Naive thymus-derived CD4-positive, alpha-beta T cell (primary cell): ENCODE measurements at regions of chr20 and their contacts with region 1.

Region 1: DNA sequence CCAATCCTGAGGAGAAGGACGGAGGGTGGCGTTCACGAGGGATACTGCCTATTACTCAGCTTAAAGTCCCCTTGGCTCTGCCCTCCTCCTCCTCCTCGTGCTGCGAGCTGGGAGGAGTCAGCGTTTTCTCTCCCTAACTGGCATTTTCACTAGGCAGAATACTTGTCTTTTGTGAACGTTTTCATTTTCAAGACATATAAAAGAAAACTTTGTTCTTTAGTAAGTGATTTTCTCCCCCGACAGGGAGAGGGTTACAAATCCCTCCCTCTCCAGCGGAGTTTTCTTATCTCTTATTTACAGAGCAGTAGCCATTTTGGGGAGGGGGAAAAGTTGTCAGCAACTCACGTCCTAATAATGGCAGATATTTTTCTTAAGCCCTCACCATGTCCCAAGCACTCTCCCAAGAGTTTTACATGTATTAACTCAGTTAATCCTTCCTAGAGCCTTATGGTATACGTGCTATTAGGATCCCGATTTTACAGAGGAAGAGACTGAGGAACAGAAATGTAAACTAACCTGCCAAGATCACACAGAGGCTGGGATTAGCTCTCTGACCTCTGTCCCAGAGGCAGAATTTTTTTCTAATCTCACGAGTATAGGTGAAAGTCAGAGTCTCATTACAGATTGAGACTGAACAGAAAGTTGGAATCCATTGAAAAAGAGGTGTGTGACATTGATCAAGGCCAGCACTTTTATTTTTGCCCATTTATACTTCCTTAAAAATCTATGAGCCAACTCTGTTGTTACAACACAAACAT is 30.0 kb upstream of the ZNF217 start:
- DNase-seq: peak in 4 of 9 donors; percentile 28 to 44 (median 31)
- ATAC-seq: peak; percentile 83
- H3K4me3 ChIP-seq: peak overlapping the region; percentile 56
- H3K4me3 Mint-ChIP-seq: peak overlapping the region; percentile 78 to 92 (median 87)
- H3K27ac ChIP-seq: peak overlapping the region; percentile 74
- H3K27ac Mint-ChIP-seq: peak overlapping the region; percentile 91 to 98 (median 97)
- H3K4me1 ChIP-seq: peaks cover 31 to 32% of the 10 kb centered on the region in 2 donors
- H3K4me1 Mint-ChIP-seq: peaks cover 17 to 53% (median 44%) of the 10 kb centered on the region in 7 donors
- H3K27me3 ChIP-seq: no peaks in the 10 kb centered on the region
- H3K27me3 Mint-ChIP-seq: no peaks in the 10 kb centered on the region

Region 2: GRCh38 chr20:53594068-53595017 is 29.3 kb before region 1 on chr20:
- CTCF ChIA-PET with region 1: interaction called, 4 read pairs
- POLR2A ChIA-PET with region 1: interaction called, 62 read pairs
- intact Hi-C with region 1: loop called in 1 of 2 experiments (anchors 1 kb)
- DNase-seq: peak; percentile 93 to 100 (median 96)
- ATAC-seq: peak; percentile 90
- H3K4me3 ChIP-seq: peak overlapping the region; percentile 81
- H3K4me3 Mint-ChIP-seq: peak overlapping the region; percentile 89 to 99 (median 92)
- H3K27ac ChIP-seq: peak overlapping the region; percentile 97
- H3K27ac Mint-ChIP-seq: peak overlapping the region; percentile 90 to 98 (median 97)
- H3K4me1 ChIP-seq: peaks cover 14 to 21% of the 10 kb centered on the region in 2 donors
- H3K4me1 Mint-ChIP-seq: peaks cover 23 to 66% (median 54%) of the 10 kb centered on the region in 7 donors
- H3K27me3 ChIP-seq: no peaks in the 10 kb centered on the region
- H3K27me3 Mint-ChIP-seq: no peaks in the 10 kb centered on the region

Region 3: DNA sequence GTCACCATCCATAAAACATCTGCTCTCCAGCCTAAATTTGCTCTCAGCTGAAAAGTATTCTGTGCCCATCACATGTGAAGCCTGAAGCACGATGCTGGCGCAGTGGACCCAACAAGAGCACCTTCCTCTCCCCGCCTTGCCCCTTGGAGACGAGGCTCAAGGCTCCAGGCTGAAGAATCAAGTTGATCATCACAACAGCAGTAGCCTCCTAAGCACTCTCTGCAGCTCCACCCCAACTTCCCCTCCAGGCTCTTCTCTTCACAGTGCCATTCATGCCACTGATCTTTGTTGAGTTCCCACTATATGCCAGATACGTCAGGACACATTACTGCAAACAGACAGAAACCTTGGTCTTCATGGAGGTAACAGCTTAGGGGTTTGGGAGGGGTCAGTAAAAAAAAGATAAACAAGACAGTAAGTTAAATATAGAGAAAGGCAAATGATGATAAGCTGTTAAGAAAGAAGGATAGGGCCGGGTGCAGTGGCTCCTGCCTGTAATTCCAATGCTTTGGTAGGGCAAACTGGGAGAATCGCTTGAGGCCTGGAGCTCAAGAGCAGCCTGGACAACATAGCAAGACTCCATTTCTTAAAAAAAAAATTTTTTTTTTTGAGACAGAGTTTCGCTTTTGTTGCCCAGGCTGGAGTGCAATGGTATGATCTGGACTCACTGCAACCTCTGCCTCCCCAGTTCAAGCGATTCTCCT is 11.7 kb after region 1 on chr20:
- CTCF ChIA-PET with region 1: no interaction called
- POLR2A ChIA-PET with region 1: interaction called, 15 read pairs
- intact Hi-C with region 1: loop called in 1 of 2 experiments (anchors 1 kb)
- DNase-seq: no peak
- ATAC-seq: peak; percentile 54
- H3K4me3 ChIP-seq: no peak overlapping the region
- H3K4me3 Mint-ChIP-seq: peak overlapping the region in 4 of 10 donors; percentile 4 to 67 (median 15)
- H3K27ac ChIP-seq: no peak overlapping the region
- H3K27ac Mint-ChIP-seq: peak overlapping the region; percentile 14 to 78 (median 49)
- H3K4me1 ChIP-seq: peaks cover 0 to 8% of the 10 kb centered on the region in 2 donors
- H3K4me1 Mint-ChIP-seq: peaks cover 33 to 55% (median 45%) of the 10 kb centered on the region in 7 donors
- H3K27me3 ChIP-seq: no peaks in the 10 kb centered on the region
- H3K27me3 Mint-ChIP-seq: no peaks in the 10 kb centered on the region

Region 4: DNA sequence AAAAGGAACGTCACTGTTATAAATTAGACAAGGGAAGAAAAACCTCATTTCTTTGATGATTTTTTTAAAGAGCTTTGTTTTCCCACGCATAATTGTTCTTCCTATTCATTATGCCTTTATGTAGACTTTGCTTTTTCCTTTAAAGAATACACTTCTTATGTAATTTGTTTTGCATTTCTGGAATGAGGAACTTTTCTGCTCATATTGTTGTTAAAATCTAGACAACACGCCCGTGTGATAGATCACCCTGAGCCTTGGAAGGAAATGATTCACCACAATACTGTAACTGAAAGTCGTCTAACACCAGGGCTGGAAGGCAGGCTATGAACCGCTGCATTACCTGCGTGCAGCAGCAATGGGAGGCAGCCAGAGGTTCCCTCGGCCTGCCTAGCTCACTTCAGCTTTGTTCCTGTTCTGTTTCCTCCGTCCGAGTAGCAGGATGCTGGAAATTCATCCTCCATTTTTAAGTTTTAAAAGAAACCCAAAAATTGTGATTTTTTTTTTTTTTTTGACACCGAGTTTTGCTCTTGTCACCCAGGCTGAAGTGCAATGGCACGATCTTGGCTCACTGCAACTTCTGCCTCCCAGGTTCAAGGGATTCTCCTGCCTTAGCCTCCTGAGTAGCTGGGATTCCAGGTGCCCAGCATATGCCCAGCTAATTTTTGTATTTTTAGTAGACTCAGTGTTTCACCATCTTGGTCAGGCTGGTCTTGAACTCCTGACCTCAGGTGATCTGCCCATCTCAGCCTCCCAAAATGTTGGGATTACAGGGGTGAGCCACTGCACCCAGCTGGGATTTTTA is 19.6 kb after region 1 on chr20:
- CTCF ChIA-PET with region 1: interaction called, 9 read pairs
- POLR2A ChIA-PET with region 1: interaction called, 29 read pairs
- intact Hi-C with region 1: loop called (anchors 1 kb)
- DNase-seq: peak in 8 of 9 donors; percentile 61 to 81 (median 75)
- ATAC-seq: peak; percentile 98
- H3K4me3 ChIP-seq: peak overlapping the region; percentile 56
- H3K4me3 Mint-ChIP-seq: peak overlapping the region; percentile 73 to 92 (median 85)
- H3K27ac ChIP-seq: peak overlapping the region; percentile 77
- H3K27ac Mint-ChIP-seq: peak overlapping the region; percentile 90 to 100 (median 97)
- H3K4me1 ChIP-seq: peaks cover 13 to 45% of the 10 kb centered on the region in 2 donors
- H3K4me1 Mint-ChIP-seq: peaks cover 30 to 64% (median 52%) of the 10 kb centered on the region in 7 donors
- H3K27me3 ChIP-seq: no peaks in the 10 kb centered on the region
- H3K27me3 Mint-ChIP-seq: no peaks in the 10 kb centered on the region

Region 5: GRCh38 chr20:53652090-53652858 is 28.6 kb after region 1 on chr20:
- CTCF ChIA-PET with region 1: interaction called, 4 read pairs
- POLR2A ChIA-PET with region 1: interaction called, 8 read pairs
- intact Hi-C with region 1: loop called (anchors 2 to 5 kb)
- DNase-seq: peak in 7 of 9 donors; percentile 34 to 61 (median 46)
- ATAC-seq: peak; percentile 85
- H3K4me3 ChIP-seq: peak overlapping the region; percentile 22
- H3K4me3 Mint-ChIP-seq: peak overlapping the region; percentile 25 to 86 (median 73)
- H3K27ac ChIP-seq: peak overlapping the region; percentile 72
- H3K27ac Mint-ChIP-seq: peak overlapping the region; percentile 88 to 97 (median 95)
- H3K4me1 ChIP-seq: peaks cover 21 to 32% of the 10 kb centered on the region in 2 donors
- H3K4me1 Mint-ChIP-seq: peaks cover 23 to 50% (median 43%) of the 10 kb centered on the region in 7 donors
- H3K27me3 ChIP-seq: no peaks in the 10 kb centered on the region
- H3K27me3 Mint-ChIP-seq: no peaks in the 10 kb centered on the region